ENCODE measurements at regions of chr1 and their contacts with region 1.

Region 1: DNA sequence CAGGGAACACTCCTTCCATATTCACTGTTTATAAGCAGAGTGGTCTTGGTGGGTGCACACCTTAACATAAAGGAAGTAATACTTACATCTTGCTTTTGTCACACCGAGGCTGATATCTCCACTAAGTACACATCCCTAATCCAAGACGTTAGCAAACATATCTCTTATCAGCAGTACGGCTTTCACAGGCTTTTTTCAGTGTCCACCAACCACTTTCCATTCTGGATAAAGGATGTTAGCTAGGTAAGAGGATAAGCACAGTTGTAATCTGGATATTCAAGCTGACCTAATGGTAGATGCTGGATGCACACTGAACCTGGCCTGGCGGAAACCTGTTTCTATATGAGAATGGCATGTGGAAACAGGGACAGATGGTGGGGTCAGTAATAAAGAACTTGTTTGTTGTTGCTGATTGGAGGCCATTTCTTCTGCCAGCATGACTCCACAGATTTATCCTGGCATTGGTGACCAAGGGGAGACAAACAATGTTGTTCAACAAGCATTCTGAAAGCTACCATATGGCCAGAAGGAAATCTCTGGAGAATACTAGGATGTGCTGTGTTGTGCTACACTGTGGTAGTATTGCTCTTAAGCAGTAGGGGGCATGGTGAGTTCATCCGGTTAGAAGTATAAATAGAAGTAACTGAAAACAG is 416.4 kb downstream of the PTBP2 start:
- DNase-seq: peak; percentile 20
- ATAC-seq: peak; percentile 99
- H3K4me3 ChIP-seq: 0 out of 2 replicates have a peak overlapping the region, but pooled peaks have one; percentile 1
- H3K27ac ChIP-seq: no peak overlapping the region
- H3K4me1 ChIP-seq: peaks cover 2% of the 10 kb centered on the region; the same call in 1 of the 2 replicates
- H3K27me3 ChIP-seq: no peaks in the 10 kb centered on the region
- CTCF ChIP-seq: peak; percentile 64 to 75 (median 74)
- EP300 ChIP-seq: no peak
- POLR2A ChIP-seq: no peak
- RAD21 ChIP-seq: peak; percentile 80

Region 2: DNA sequence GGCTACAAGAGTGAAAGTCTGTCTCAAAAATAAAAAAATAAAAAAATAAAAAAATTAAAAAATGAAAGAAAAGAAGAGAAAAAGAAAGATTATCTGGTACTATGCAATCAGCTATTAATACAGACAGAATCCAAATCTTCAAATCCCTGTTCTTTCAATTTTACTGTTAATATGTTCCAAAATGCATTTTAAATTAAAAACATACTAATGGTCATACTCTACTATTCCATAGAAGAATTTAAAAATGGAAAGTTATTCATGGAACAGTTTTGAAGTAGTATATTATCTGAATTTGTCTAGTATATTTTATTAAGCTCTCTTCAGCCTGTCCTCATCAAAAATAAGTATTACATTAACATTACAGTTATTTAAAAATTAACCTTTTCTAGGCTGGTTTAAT is 13.7 kb after region 1 on chr1:
- CTCF ChIA-PET with region 1: interaction called, 26 read pairs
- POLR2A ChIA-PET with region 1: interaction called, 3 read pairs
- RAD21 ChIA-PET with region 1: interaction called, 3 read pairs
- SMC1A ChIA-PET with region 1: interaction called, 17 read pairs
- in situ Hi-C with region 1: no loop called
- intact Hi-C with region 1: no loop called
- DNase-seq: no peak
- ATAC-seq: no peak
- H3K4me3 ChIP-seq: no peak overlapping the region
- H3K27ac ChIP-seq: no peak overlapping the region
- H3K4me1 ChIP-seq: no peaks in the 10 kb centered on the region
- H3K27me3 ChIP-seq: no peaks in the 10 kb centered on the region
- CTCF ChIP-seq: no peak
- EP300 ChIP-seq: no peak
- POLR2A ChIP-seq: no peak
- RAD21 ChIP-seq: no peak

Region 3: DNA sequence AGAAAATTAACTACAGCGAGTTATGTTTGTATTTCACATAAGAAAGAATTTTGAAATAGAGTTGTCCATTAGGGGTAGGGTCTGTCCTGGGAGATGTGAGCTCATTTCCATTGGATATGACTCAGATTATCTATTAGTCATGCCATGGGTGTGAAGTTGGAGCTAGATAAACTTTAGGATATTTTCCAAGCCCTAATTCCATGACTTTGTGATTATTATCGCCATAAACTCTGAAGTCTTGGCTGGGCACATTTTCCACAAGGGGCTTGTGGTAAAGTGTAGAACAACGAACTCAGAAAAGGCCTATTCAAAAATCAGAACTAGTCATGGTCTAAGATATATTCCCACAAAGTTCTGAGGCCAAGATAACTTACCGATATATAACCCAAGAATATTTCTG is 386.2 kb after region 1 on chr1:
- CTCF ChIA-PET with region 1: interaction called, 17 read pairs
- POLR2A ChIA-PET with region 1: no interaction called
- RAD21 ChIA-PET with region 1: interaction called, 7 read pairs
- SMC1A ChIA-PET with region 1: interaction called, 9 read pairs
- in situ Hi-C with region 1: no loop called
- intact Hi-C with region 1: loop called (anchors 10 kb)
- DNase-seq: no peak
- ATAC-seq: no peak
- H3K4me3 ChIP-seq: no peak overlapping the region
- H3K27ac ChIP-seq: no peak overlapping the region
- H3K4me1 ChIP-seq: no peaks in the 10 kb centered on the region
- H3K27me3 ChIP-seq: no peaks in the 10 kb centered on the region
- CTCF ChIP-seq: no peak
- EP300 ChIP-seq: no peak
- POLR2A ChIP-seq: no peak
- RAD21 ChIP-seq: no peak

Region 4: GRCh38 chr1:97820470-97821188 is 682.6 kb after region 1 on chr1:
- CTCF ChIA-PET with region 1: interaction called, 15 read pairs
- POLR2A ChIA-PET with region 1: no interaction called
- RAD21 ChIA-PET with region 1: interaction called, 6 read pairs
- SMC1A ChIA-PET with region 1: interaction called, 10 read pairs
- in situ Hi-C with region 1: no loop called
- intact Hi-C with region 1: loop called (anchors 2 kb)
- DNase-seq: no peak
- ATAC-seq: peak; percentile 78
- H3K4me3 ChIP-seq: no peak overlapping the region
- H3K27ac ChIP-seq: no peak overlapping the region
- H3K4me1 ChIP-seq: no peaks in the 10 kb centered on the region
- H3K27me3 ChIP-seq: no peaks in the 10 kb centered on the region
- CTCF ChIP-seq: peak; percentile 11 to 56 (median 36); a peak in 5 of 6 replicates
- EP300 ChIP-seq: no peak
- POLR2A ChIP-seq: no peak
- RAD21 ChIP-seq: peak; percentile 72

Region 5: DNA sequence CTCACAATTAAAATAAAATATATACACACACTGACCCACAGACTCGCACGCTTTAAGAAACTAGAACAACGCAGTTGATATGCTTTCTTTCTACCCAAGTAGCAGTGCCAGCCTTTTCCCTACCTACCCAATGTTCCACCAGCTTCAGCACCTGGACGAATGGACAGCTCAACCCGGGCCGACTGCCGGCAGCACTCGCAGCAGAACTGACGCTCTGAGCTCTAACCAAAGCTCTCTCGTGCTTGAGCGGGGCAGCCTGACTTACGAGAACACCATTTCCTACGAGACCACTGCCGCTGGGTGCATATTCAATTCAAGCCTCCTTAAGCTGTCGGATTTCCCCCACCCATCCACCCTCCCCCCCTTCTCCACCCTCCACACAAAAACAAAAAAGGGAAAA is 910.3 kb after region 1 on chr1:
- CTCF ChIA-PET with region 1: interaction called, 8 read pairs
- POLR2A ChIA-PET with region 1: no interaction called
- RAD21 ChIA-PET with region 1: interaction called, 11 read pairs
- SMC1A ChIA-PET with region 1: interaction called, 8 read pairs
- in situ Hi-C with region 1: loop called (anchors 10 kb)
- intact Hi-C with region 1: loop called (anchors 1 kb)
- DNase-seq: no peak
- ATAC-seq: peak; percentile 88
- H3K4me3 ChIP-seq: no peak overlapping the region
- H3K27ac ChIP-seq: no peak overlapping the region
- H3K4me1 ChIP-seq: no peaks in the 10 kb centered on the region
- H3K27me3 ChIP-seq: peaks cover 11 to 24% of the 10 kb centered on the region in 2 experiments
- CTCF ChIP-seq: no peak
- EP300 ChIP-seq: no peak
- POLR2A ChIP-seq: no peak
- RAD21 ChIP-seq: no peak

Measured in GM12878 (cell line).